A673 (cell line): ENCODE measurements at regions of chr1 and their contacts with region 1.

Region 1: GRCh38 chr1:145957443-145958319 is at the start of gene LIX1L:
- DNase-seq: peak; percentile 99
- H3K4me3 ChIP-seq: peak within 1 kb of the TSS; percentile 69
- H3K27ac ChIP-seq: peak within 1 kb of the TSS; percentile 90
- H3K4me1 ChIP-seq: peaks cover 43% of the 10 kb centered on the region
- H3K27me3 ChIP-seq: no peaks in the 10 kb centered on the region
- CTCF ChIP-seq: no peak
- total RNA-seq, gene LIX1L: 39.6 and 40.1 TPM in 2 replicates

Region 2: DNA sequence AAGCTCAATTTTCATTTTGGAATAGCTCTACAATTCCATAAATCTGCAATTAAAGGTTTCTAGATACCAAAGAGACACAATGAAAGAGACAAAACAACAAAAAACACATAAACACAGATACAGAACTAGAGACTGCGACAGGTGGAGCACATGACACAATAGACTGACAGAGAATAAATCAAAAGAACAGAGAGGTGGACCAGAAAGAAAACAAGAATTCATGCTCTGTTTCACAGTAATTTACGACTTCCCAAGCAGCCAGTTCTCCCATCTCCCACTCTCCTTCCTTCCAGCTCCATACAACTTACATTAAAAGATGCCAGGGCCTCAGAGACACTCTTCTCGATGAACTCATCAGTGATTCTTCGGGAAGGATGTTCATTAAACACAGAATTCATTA is 15.3 kb before region 1 on chr1:
- CTCF ChIA-PET with region 1: no interaction called
- POLR2A ChIA-PET with region 1: no interaction called
- intact Hi-C with region 1: no loop called
- DNase-seq: no peak
- H3K4me3 ChIP-seq: no peak overlapping the region
- H3K27ac ChIP-seq: no peak overlapping the region
- H3K4me1 ChIP-seq: no peaks in the 10 kb centered on the region
- H3K27me3 ChIP-seq: no peaks in the 10 kb centered on the region
- CTCF ChIP-seq: no peak

Region 3: DNA sequence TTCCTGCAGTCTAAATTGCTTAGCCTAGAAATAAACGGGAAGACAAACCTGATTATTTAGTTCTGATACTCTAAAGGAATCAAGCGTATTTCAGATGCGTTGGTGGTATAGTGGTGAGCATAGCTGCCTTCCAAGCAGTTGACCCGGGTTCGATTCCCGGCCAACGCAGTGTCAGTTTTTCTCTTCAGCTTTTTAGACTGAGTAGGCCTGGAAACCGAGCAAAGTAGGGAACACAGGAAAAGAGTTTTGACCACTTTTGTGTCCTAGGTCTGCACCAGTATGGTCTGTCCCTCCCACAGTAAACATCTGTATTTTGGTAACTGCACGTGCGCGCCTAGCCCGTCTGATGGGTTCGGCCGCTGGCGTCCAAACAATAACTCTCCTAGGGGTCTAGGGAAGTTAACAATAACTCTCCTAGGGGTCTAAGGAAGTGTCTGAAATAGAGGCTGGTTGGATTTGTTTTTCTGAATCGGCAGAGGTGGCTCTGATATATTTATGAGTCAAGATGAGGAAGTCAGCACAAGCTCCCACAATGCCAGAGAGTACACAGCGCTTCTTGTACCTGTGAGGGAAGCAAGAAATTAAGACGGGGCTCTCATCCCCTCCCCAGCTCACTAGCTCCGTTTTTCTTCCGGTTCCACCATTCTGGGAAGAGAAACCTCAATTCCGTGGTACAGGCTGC is 79.4 kb after region 1 on chr1:
- CTCF ChIA-PET with region 1: no interaction called
- POLR2A ChIA-PET with region 1: interaction called, 15 read pairs
- intact Hi-C with region 1: no loop called
- DNase-seq: peak; percentile 95
- H3K4me3 ChIP-seq: peak overlapping the region; percentile 72
- H3K27ac ChIP-seq: peak overlapping the region; percentile 95
- H3K4me1 ChIP-seq: peaks cover 7% of the 10 kb centered on the region
- H3K27me3 ChIP-seq: no peaks in the 10 kb centered on the region
- CTCF ChIP-seq: no peak